ENCODE measurements at regions of chr19 and their contacts with region 1.

Region 1: DNA sequence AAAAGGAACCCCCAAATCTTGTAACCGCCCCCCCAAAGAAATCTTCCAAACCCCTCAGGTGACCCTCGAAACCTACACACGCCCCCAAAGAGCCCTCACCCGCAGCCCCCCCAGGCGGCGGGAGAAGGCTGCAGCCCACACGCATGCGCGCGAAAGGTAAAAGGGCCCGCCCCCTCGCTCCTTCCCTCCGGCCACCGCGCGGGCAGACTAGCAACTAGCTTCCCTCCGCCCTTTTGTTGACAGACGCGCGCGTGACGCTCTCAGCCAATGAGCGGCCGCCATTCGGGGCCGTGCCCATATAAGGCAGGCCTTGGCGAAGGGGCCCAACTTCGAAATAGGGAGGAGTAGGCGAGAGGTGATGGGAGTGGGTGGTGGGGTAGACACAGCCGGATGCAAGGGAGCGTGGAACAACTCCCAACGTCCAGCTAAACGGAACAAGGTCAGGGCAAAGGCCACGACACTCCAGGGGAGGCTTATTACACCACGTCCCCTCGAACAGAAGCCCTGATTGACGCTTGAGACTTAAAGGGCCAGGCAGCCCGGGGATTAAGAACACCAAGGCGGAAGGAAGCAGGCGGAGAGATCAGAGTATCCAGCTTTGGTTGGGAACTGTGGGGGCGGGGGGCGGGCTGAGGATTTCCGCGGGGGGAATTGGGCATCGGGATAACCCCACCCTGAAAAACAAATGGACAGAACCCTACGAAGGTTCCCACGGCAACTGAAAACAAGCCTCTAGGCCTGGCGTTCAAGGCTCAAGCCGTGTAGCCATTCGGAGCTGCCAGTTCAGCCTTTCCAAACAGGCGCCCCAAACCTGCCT is 13.3 kb downstream of the FBXO46 start:
- DNase-seq: peak; percentile 99
- H3K4me3 ChIP-seq: peak overlapping the region; percentile 53 to 61
- H3K27ac ChIP-seq: peak overlapping the region; percentile 95
- H3K4me1 ChIP-seq: no peaks in the 10 kb centered on the region
- H3K27me3 ChIP-seq: no peaks in the 10 kb centered on the region
- CTCF ChIP-seq: peak; percentile 7 to 68 (median 30)
- POLR2A ChIP-seq: peak; percentile 97

Region 2: GRCh38 chr19:45692187-45693105 is 24.9 kb before region 1 on chr19 and contains the start of gene QPCTL:
- intact Hi-C with region 1: loop called (anchors 2 kb)
- DNase-seq: peak; percentile 99
- H3K4me3 ChIP-seq: peak within 1 kb of the TSS; percentile 71 to 75
- H3K27ac ChIP-seq: peak within 1 kb of the TSS; percentile 93 to 96
- H3K4me1 ChIP-seq: peaks cover 3% of the 10 kb centered on the region
- H3K27me3 ChIP-seq: no peaks in the 10 kb centered on the region
- CTCF ChIP-seq: peak in 1 of 4 experiments; percentile 15
- POLR2A ChIP-seq: peak; percentile 75
- total RNA-seq, gene QPCTL: 5.2 to 18.4 TPM

Region 3: DNA sequence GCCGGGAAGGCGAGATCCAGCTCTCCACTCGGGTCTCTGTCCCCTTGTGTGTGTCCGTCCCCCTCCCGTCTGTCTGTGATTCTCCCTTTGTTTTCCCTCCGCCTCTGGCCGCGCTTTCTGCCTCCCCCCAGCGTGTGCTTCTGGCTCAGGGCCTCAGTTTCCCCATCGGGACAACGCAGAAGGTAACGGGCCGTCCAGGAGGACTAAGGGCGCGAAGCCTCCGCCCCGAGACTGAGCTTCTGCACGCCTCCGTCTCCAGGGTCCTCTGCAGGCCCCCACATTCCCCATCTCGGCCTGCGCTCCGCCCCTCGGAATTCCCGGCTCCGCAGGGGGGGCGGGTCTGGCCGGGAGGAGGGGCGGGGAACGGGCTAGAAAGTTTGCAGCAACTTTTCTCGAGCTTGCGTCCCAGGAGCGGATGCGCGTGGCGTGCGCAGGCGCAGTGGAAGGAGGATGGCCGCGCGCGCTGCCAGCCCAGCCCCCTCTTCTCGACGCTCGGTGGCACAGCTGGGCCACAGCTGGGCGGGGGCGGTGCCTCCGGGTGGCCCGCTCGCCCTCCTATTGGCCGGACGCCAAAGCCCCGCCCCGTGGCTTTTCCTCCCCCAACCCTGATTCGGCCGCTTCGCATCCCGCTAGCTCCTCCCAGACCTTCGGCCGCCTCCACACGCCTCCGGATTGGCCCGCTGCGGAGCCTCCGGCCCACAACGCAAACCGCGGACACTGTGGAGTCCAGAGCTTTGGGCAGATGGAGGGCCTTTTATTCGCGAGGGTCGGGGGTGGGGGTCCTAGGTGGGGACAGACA is 51.8 kb after region 1 on chr19 and contains the start of gene SIX5:
- intact Hi-C with region 1: loop called (anchors 5 kb)
- DNase-seq: peak; percentile 97
- H3K4me3 ChIP-seq: peak within 1 kb of the TSS; percentile 79 to 83
- H3K27ac ChIP-seq: peak within 1 kb of the TSS; percentile 97 to 99
- H3K4me1 ChIP-seq: peaks cover 28% of the 10 kb centered on the region
- H3K27me3 ChIP-seq: no peaks in the 10 kb centered on the region
- CTCF ChIP-seq: peak in 1 of 4 experiments; percentile 13
- POLR2A ChIP-seq: peak; percentile 85
- total RNA-seq, gene SIX5: 33.7 to 37.5 TPM

Region 4: GRCh38 chr19:45798995-45799517 is 81.7 kb after region 1 on chr19:
- intact Hi-C with region 1: loop called (anchors 5 kb)
- DNase-seq: no peak
- H3K4me3 ChIP-seq: no peak overlapping the region
- H3K27ac ChIP-seq: peak overlapping the region; percentile 2 to 11
- H3K4me1 ChIP-seq: no peaks in the 10 kb centered on the region
- H3K27me3 ChIP-seq: no peaks in the 10 kb centered on the region
- CTCF ChIP-seq: peak; percentile 75 to 89 (median 86)
- POLR2A ChIP-seq: no peak

Region 5: DNA sequence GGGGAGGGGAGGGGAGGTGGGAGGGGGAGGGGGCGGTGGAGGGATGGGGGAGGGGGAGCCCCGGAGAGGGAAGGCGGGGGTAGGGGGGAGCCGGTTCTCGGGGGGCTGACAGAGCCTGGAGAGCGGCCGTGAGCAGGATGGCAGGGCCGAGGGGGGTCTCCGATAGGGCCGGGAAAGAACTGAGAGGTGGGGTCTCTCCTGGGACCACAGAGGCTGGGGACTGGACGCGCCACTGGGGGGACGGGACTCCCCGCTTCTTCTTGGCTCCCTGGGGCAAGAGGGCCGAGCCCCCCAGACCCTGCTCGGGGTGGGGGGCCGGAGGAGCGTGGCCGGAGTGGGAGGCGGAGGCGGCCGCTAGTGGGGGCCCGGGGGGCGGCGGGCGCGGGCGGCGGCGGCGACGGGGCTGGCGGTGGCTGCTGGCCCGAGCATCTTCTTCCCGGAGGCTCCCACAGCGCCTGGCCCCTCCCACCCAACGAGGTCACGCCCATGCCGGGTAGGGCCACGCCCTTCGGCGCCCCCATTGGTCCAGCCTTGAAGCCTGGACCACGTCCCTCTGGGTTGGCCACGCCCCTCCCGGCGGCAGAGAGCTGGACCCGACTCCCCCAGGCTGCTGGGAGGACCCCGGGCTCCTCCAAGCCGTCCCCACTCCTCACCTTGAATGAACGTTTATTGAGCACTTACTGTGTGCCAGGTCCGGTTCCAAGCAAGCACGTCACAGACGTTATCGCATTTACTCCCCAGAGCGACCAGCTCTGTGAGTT is 256.4 kb after region 1 on chr19 and contains the start of gene NOVA2:
- intact Hi-C with region 1: no loop called
- DNase-seq: no peak
- H3K4me3 ChIP-seq: peak within 1 kb of the TSS in 1 of 2 donors; percentile 19
- H3K27ac ChIP-seq: no peak within 1 kb of the TSS
- H3K4me1 ChIP-seq: no peaks in the 10 kb centered on the region
- H3K27me3 ChIP-seq: peaks cover 15% of the 10 kb centered on the region
- CTCF ChIP-seq: no peak
- POLR2A ChIP-seq: no peak
- total RNA-seq, gene NOVA2: 0.87 to 3.1 TPM